Esophagus squamous epithelium (tissue), 5 donors: ENCODE measurements at regions of chr3 and their contacts with region 1.

Region 1: GRCh38 chr3:111967651-111968274 is 11.1 kb upstream of the ABHD10 start:
- DNase-seq: peak; percentile 27
- H3K4me3 ChIP-seq: no peak overlapping the region
- H3K27ac ChIP-seq: peak overlapping the region in 2 of 4 donors; percentile 24 to 35
- H3K4me1 ChIP-seq: peaks cover 0 to 24% (median 0%) of the 10 kb centered on the region in 3 donors
- H3K27me3 ChIP-seq: no peaks in the 10 kb centered on the region
- CTCF ChIP-seq: peak; percentile 83 to 90 (median 88)
- POLR2A ChIP-seq: no peak

Region 2: GRCh38 chr3:111691293-111691909 is 276.4 kb before region 1 on chr3:
- intact Hi-C with region 1: no loop called
- DNase-seq: no peak
- H3K4me3 ChIP-seq: no peak overlapping the region
- H3K27ac ChIP-seq: no peak overlapping the region
- H3K4me1 ChIP-seq: no peaks in the 10 kb centered on the region
- H3K27me3 ChIP-seq: no peaks in the 10 kb centered on the region
- CTCF ChIP-seq: peak in 4 of 6 experiments; percentile 7 to 60 (median 19)
- POLR2A ChIP-seq: no peak

Region 3: DNA sequence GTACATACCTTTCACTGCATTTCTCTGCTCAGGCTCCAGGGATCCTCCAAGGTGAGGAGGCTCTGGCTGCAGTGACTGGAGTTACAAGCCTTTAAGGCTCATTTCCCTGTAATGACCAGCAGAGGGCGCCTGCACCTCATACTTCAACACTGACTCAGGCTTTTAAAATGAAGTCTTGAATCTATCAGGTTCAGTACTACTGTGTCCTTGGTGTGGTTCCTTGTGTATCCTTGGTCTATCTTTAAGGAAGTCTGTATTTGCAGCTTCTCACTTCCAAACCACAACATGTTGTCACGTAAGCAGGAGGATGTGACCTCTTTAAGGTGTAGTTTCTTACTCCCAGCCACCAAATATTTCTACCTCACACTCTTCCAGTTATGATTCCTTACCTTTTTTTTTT is 250.2 kb before region 1 on chr3:
- intact Hi-C with region 1: loop called (anchors 5 kb)
- DNase-seq: no peak
- H3K4me3 ChIP-seq: no peak overlapping the region
- H3K27ac ChIP-seq: peak overlapping the region in 2 of 4 donors; percentile 16 to 19
- H3K4me1 ChIP-seq: peaks cover 0 to 14% (median 4%) of the 10 kb centered on the region in 3 donors
- H3K27me3 ChIP-seq: no peaks in the 10 kb centered on the region
- CTCF ChIP-seq: peak; percentile 82 to 99 (median 96)
- POLR2A ChIP-seq: no peak

Region 4: GRCh38 chr3:111859974-111860859 is 107.5 kb before region 1 on chr3:
- intact Hi-C with region 1: loop called (anchors 10 kb)
- DNase-seq: peak; percentile 22
- H3K4me3 ChIP-seq: peak overlapping the region; percentile 59 to 89 (median 75)
- H3K27ac ChIP-seq: peak overlapping the region; percentile 85 to 96 (median 94)
- H3K4me1 ChIP-seq: peaks cover 0 to 62% (median 31%) of the 10 kb centered on the region in 3 donors
- H3K27me3 ChIP-seq: no peaks in the 10 kb centered on the region
- CTCF ChIP-seq: peak; percentile 24 to 83 (median 60)
- POLR2A ChIP-seq: peak in 3 of 4 donors; percentile 43 to 69 (median 67)